ENCODE measurements at regions of chr14 and their contacts with region 1.

Region 1: GRCh38 chr14:69346710-69347109 is 51.4 kb downstream of the ERH start:
- DNase-seq: no peak
- H3K4me3 Mint-ChIP-seq: no peak overlapping the region
- H3K27ac Mint-ChIP-seq: no peak overlapping the region
- H3K4me1 Mint-ChIP-seq: peaks cover 4% of the 10 kb centered on the region
- H3K27me3 Mint-ChIP-seq: peaks cover 4% of the 10 kb centered on the region

Region 2: DNA sequence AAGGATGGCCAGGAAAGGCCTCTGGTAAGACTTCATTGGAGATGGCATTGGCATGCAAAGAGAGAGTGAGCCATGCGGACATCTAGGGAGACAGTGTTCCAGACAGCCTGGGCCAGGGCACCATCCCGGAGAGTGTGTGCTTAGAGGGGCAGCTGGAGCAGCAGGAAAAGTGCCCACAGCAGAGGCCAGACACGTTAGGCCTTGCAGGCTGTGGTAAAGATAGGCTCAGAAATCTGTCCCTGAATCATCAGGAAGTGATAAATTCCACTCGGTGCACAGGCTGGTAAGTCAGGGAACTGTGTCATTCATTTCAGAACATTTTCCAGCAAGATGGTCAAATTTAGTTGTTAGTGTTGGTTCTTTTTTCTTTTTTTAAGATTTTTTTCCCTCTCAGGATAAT is 77.9 kb before region 1 on chr14:
- CTCF ChIA-PET with region 1: no interaction called
- POLR2A ChIA-PET with region 1: no interaction called
- DNase-seq: no peak
- H3K4me3 Mint-ChIP-seq: no peak overlapping the region
- H3K27ac Mint-ChIP-seq: no peak overlapping the region
- H3K4me1 Mint-ChIP-seq: no peaks in the 10 kb centered on the region
- H3K27me3 Mint-ChIP-seq: peaks cover 21% of the 10 kb centered on the region

Region 3: GRCh38 chr14:69358233-69358963 is 11.7 kb after region 1 on chr14:
- CTCF ChIA-PET with region 1: interaction called, 12 read pairs
- POLR2A ChIA-PET with region 1: no interaction called
- DNase-seq: no peak
- H3K4me3 Mint-ChIP-seq: no peak overlapping the region
- H3K27ac Mint-ChIP-seq: no peak overlapping the region
- H3K4me1 Mint-ChIP-seq: peaks cover 18% of the 10 kb centered on the region
- H3K27me3 Mint-ChIP-seq: no peaks in the 10 kb centered on the region

Region 4: DNA sequence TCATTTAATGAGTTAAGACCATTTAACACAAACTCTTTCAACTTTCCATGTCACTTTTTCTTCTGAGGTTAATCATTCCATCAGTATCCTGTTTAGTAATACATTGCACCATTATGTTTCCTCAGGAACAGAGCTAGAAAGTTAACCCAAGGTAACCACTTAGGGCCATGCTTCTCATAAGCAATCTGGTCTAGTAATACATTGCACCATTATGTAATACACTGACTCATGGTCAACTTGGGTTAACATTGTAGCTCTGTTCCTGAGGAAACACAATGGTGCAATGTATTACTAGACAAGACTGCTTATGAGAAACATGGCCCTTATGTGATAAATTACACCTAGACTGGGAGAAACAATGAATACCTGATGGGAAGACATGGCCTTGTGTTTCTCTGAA is 29.7 kb after region 1 on chr14:
- CTCF ChIA-PET with region 1: no interaction called
- POLR2A ChIA-PET with region 1: no interaction called
- DNase-seq: no peak
- H3K4me3 Mint-ChIP-seq: no peak overlapping the region
- H3K27ac Mint-ChIP-seq: no peak overlapping the region
- H3K4me1 Mint-ChIP-seq: no peaks in the 10 kb centered on the region
- H3K27me3 Mint-ChIP-seq: no peaks in the 10 kb centered on the region

Measured in activated CD4-positive, alpha-beta T cell treated with anti-CD3 and anti-CD28 coated beads, Interleukin-2, amount 10 ng/mL, durations not matched to agents 7 days and 5 days (primary cell).